ENCODE measurements at regions of chr2 and their contacts with region 1.

Region 1: GRCh38 chr2:73233154-73233931 is at the start of gene PRADC1:
- DNase-seq: peak; percentile 88
- ATAC-seq: peak; percentile 89
- H3K4me3 Mint-ChIP-seq: peak within 1 kb of the TSS; percentile 94
- H3K27ac Mint-ChIP-seq: peak within 1 kb of the TSS; percentile 88
- H3K4me1 Mint-ChIP-seq: peaks cover 35% of the 10 kb centered on the region
- H3K27me3 Mint-ChIP-seq: no peaks in the 10 kb centered on the region
- total RNA-seq, gene PRADC1: 11.6 to 12.5 TPM

Region 2: GRCh38 chr2:73212448-73213176 is 20.7 kb before region 1 on chr2:
- POLR2A ChIA-PET with region 1: interaction called, 20 read pairs
- DNase-seq: peak; percentile 82
- ATAC-seq: peak; percentile 78
- H3K4me3 Mint-ChIP-seq: no peak overlapping the region
- H3K27ac Mint-ChIP-seq: no peak overlapping the region
- H3K4me1 Mint-ChIP-seq: peaks cover 21% of the 10 kb centered on the region
- H3K27me3 Mint-ChIP-seq: peaks cover 1% of the 10 kb centered on the region

Region 3: DNA sequence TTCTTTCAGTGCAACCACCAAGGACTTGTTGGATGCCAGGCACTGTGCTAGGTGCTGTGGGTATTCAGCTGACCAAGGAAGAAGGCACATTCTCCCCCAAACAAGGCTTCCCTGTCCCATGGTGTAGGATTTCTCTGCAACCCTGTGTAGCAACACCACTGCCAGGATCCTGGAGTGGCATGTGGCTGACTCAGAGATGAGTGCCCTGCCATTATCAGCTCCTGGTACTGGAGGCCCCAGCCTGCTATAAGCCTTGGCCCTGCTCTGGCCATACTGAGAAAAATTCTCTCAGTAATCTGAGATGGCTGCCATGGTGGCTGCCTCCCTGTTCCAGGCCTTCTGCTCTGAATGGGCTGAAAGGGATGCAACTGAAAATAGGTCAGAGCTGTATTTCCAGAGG is 15.0 kb before region 1 on chr2:
- POLR2A ChIA-PET with region 1: interaction called, 20 read pairs
- DNase-seq: no peak
- ATAC-seq: no peak
- H3K4me3 Mint-ChIP-seq: no peak overlapping the region
- H3K27ac Mint-ChIP-seq: no peak overlapping the region
- H3K4me1 Mint-ChIP-seq: peaks cover 22% of the 10 kb centered on the region
- H3K27me3 Mint-ChIP-seq: no peaks in the 10 kb centered on the region

Region 4: GRCh38 chr2:73284296-73285158 is 51.2 kb after region 1 on chr2 and contains the start of gene FBXO41:
- POLR2A ChIA-PET with region 1: interaction called, 18 read pairs
- DNase-seq: peak; percentile 85
- ATAC-seq: peak; percentile 80
- H3K4me3 Mint-ChIP-seq: peak within 1 kb of the TSS; percentile 86
- H3K27ac Mint-ChIP-seq: peak within 1 kb of the TSS; percentile 81
- H3K4me1 Mint-ChIP-seq: peaks cover 35% of the 10 kb centered on the region
- H3K27me3 Mint-ChIP-seq: peaks cover 10% of the 10 kb centered on the region
- total RNA-seq, gene FBXO41: 33.6 to 35.7 TPM